ENCODE measurements at regions of chr19 and their contacts with region 1.

Region 1: GRCh38 chr19:2739602-2740313 is at the start of gene SLC39A3:
- DNase-seq: peak; percentile 96 to 98 (median 97)
- H3K4me3 ChIP-seq: peak within 1 kb of the TSS; percentile 81 to 93 (median 90)
- H3K4me3 Mint-ChIP-seq: peak within 1 kb of the TSS; percentile 78 to 82
- H3K27ac ChIP-seq: peak within 1 kb of the TSS in 1 of 2 donors; percentile 78
- H3K27ac Mint-ChIP-seq: peak within 1 kb of the TSS in 6 of 7 donors; percentile 37 to 77 (median 52)
- H3K4me1 ChIP-seq: peaks cover 15 to 26% of the 10 kb centered on the region in 2 donors
- H3K4me1 Mint-ChIP-seq: peaks cover 27% of the 10 kb centered on the region
- H3K27me3 ChIP-seq: no peaks in the 10 kb centered on the region
- H3K27me3 Mint-ChIP-seq: peaks cover 6 to 15% (median 13%) of the 10 kb centered on the region in 3 donors
- CTCF ChIP-seq: no peak
- polyA plus RNA-seq, gene SLC39A3: 14.2 to 39.5 (median 37.0) TPM

Region 2: GRCh38 chr19:2461751-2462634 is 277.8 kb before region 1 on chr19:
- intact Hi-C with region 1: loop called in 1 of 2 experiments (anchors 10 kb)
- DNase-seq: no peak
- H3K4me3 ChIP-seq: peak overlapping the region; percentile 57 to 85 (median 83)
- H3K4me3 Mint-ChIP-seq: peak overlapping the region; percentile 90 to 97
- H3K27ac ChIP-seq: peak overlapping the region in 1 of 2 donors; percentile 33
- H3K27ac Mint-ChIP-seq: peak overlapping the region in 4 of 7 donors; percentile 11 to 90 (median 67)
- H3K4me1 ChIP-seq: peaks cover 23 to 28% of the 10 kb centered on the region in 2 donors
- H3K4me1 Mint-ChIP-seq: peaks cover 29% of the 10 kb centered on the region
- H3K27me3 ChIP-seq: no peaks in the 10 kb centered on the region
- H3K27me3 Mint-ChIP-seq: peaks cover 2 to 9% (median 2%) of the 10 kb centered on the region in 3 donors
- CTCF ChIP-seq: no peak

Region 3: DNA sequence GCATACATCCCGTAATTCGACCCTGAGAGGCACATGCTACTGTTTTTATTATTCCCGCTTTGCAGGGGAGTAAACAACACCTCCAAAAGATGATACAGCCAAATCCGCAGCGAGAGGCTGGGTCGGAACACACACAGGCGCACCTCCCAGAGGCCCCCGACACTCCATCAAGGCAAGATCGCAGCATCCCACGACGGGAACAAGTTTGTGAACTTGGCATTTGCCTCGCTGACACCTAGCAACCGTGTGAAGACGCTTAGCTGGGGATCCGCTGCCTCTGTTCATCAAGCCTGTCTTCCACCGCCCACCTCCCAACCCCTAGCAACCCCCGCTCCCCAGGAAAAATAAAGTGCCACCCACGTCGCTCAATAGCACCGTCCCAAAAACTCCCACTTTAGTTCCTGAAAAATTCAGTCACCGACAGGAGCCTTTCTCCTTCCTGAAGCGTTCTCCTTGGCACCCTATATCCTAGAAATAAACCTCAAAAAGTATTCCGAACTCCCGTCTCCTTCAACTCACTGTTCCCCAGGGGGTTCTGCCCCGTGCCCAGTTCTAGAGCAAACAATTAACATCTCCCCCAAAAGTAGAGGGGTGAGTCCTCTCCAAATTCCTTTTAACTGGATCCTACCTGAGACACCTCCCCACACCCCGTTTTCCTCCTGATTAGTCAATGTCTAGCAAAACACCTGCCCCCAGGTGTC is 38.9 kb before region 1 on chr19:
- intact Hi-C with region 1: no loop called
- DNase-seq: peak in 1 of 3 donors; percentile 1
- H3K4me3 ChIP-seq: no peak overlapping the region
- H3K4me3 Mint-ChIP-seq: no peak overlapping the region
- H3K27ac ChIP-seq: no peak overlapping the region
- H3K27ac Mint-ChIP-seq: no peak overlapping the region
- H3K4me1 ChIP-seq: peaks cover 10 to 12% of the 10 kb centered on the region in 2 donors
- H3K4me1 Mint-ChIP-seq: peaks cover 32% of the 10 kb centered on the region
- H3K27me3 ChIP-seq: no peaks in the 10 kb centered on the region
- H3K27me3 Mint-ChIP-seq: peaks cover 3 to 7% (median 6%) of the 10 kb centered on the region in 3 donors
- CTCF ChIP-seq: no peak